Endothelial cell of umbilical vein (primary cell): ENCODE measurements at regions of chr1 and their contacts with region 1.

Region 1: DNA sequence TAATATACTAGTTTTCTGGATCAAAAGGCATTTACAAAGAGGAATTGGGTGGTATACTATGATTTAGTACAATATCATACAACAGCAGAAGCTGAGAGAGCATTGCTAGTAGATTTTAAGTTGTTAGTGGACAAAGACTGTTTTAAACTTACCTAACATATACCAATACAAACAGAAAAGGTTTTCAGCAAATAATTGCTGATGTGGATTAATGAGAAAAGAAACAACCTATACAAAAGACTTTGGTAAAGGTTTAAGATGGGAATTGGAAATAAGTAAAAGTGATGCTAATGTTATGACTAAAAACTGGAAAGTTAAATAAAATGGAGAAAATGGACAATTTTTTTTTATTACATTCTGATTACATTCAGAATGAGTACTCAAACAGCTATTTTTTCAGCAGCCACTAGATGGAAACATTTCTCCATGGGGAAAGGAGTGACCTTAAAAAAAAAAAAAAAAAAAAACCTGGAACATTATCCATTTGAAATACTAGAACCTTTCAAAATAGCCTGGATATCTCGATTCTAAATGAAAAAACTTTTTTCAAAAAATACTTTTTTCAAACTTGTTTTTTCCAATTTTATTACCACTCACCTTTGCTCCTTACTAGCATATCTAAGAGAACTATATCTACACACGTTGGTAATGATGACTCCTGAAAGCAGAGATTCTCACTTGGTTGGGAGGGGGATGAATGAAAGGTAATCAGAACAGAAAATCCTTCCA is 55.4 kb downstream of the EPRS1 start:
- DNase-seq: peak; percentile 58
- H3K4me3 ChIP-seq: no peak overlapping the region
- H3K27ac ChIP-seq: no peak overlapping the region
- H3K4me1 ChIP-seq: no peaks in the 10 kb centered on the region
- H3K27me3 ChIP-seq: no peaks in the 10 kb centered on the region
- CTCF ChIP-seq: peak; percentile 31 to 47
- POLR2A ChIP-seq: no peak

Region 2: GRCh38 chr1:219639876-219640577 is 350.9 kb before region 1 on chr1:
- CTCF ChIA-PET with region 1: no interaction called
- POLR2A ChIA-PET with region 1: no interaction called
- dilution Hi-C with region 1: no loop called
- intact Hi-C with region 1: no loop called
- DNase-seq: no peak
- H3K4me3 ChIP-seq: no peak overlapping the region
- H3K27ac ChIP-seq: no peak overlapping the region
- H3K4me1 ChIP-seq: no peaks in the 10 kb centered on the region
- H3K27me3 ChIP-seq: no peaks in the 10 kb centered on the region
- CTCF ChIP-seq: no peak
- POLR2A ChIP-seq: no peak

Region 3: DNA sequence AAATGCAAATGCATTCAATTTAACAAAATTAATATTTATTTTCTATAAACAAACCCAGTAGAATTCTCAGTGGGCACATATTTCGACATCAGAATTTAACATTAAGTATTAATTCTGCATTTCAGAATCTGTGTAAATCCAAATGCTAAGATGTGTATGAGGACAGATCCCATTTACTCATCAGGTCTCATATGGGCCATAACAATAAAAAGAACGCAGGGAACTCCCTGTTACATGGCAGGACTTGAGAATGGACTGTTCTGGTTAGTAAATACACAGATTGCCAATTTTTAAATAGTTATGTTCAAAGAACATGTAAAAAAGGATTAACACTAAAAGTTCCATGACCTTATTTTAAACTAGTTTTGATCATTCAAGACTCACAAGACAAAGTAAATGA is 166.6 kb before region 1 on chr1:
- CTCF ChIA-PET with region 1: no interaction called
- POLR2A ChIA-PET with region 1: no interaction called
- dilution Hi-C with region 1: no loop called
- intact Hi-C with region 1: no loop called
- DNase-seq: no peak
- H3K4me3 ChIP-seq: no peak overlapping the region
- H3K27ac ChIP-seq: no peak overlapping the region
- H3K4me1 ChIP-seq: no peaks in the 10 kb centered on the region
- H3K27me3 ChIP-seq: no peaks in the 10 kb centered on the region
- CTCF ChIP-seq: no peak
- POLR2A ChIP-seq: no peak

Region 4: DNA sequence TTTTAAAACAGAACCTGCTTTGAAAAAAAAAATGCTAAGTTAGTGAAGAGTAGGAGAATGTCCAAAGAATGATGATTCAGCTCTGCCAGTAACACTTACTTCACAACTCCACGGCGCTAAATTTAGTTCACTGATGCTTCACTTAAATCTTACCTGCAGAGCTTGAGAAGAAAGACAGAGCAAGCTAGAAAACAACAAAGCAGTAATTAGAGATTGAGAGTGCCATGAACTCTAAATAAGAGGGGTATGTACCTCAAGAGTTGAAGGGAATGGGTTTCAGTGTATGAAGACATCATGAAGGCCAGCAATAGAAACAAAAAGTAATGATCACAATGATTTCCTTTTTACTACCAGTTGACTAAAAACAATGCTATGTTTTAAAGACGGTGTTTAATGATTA is 22.6 kb after region 1 on chr1:
- CTCF ChIA-PET with region 1: interaction called, 36 read pairs
- POLR2A ChIA-PET with region 1: interaction called, 4 read pairs
- dilution Hi-C with region 1: no loop called
- intact Hi-C with region 1: no loop called
- DNase-seq: no peak
- H3K4me3 ChIP-seq: no peak overlapping the region
- H3K27ac ChIP-seq: no peak overlapping the region
- H3K4me1 ChIP-seq: no peaks in the 10 kb centered on the region
- H3K27me3 ChIP-seq: no peaks in the 10 kb centered on the region
- CTCF ChIP-seq: no peak
- POLR2A ChIP-seq: no peak

Region 5: GRCh38 chr1:220089650-220090556 is 99.0 kb after region 1 on chr1 and contains the start of gene BPNT1:
- CTCF ChIA-PET with region 1: interaction called, 14 read pairs
- POLR2A ChIA-PET with region 1: no interaction called
- dilution Hi-C with region 1: no loop called
- intact Hi-C with region 1: no loop called
- DNase-seq: peak; percentile 97
- H3K4me3 ChIP-seq: peak within 1 kb of the TSS; percentile 44 to 82 (median 46)
- H3K27ac ChIP-seq: peak within 1 kb of the TSS; percentile 0
- H3K4me1 ChIP-seq: peaks cover 3% of the 10 kb centered on the region
- H3K27me3 ChIP-seq: no peaks in the 10 kb centered on the region
- CTCF ChIP-seq: no peak
- POLR2A ChIP-seq: peak; percentile 96
- total RNA-seq, gene BPNT1: 17.4 and 20.3 TPM in 2 replicates

Region 6: GRCh38 chr1:220113136-220113695 is 122.3 kb after region 1 on chr1:
- CTCF ChIA-PET with region 1: interaction called, 12 read pairs
- POLR2A ChIA-PET with region 1: no interaction called
- dilution Hi-C with region 1: no loop called
- intact Hi-C with region 1: no loop called
- DNase-seq: peak; percentile 40
- H3K4me3 ChIP-seq: no peak overlapping the region
- H3K27ac ChIP-seq: no peak overlapping the region
- H3K4me1 ChIP-seq: no peaks in the 10 kb centered on the region
- H3K27me3 ChIP-seq: no peaks in the 10 kb centered on the region
- CTCF ChIP-seq: peak; percentile 50 to 56
- POLR2A ChIP-seq: no peak

Region 7: DNA sequence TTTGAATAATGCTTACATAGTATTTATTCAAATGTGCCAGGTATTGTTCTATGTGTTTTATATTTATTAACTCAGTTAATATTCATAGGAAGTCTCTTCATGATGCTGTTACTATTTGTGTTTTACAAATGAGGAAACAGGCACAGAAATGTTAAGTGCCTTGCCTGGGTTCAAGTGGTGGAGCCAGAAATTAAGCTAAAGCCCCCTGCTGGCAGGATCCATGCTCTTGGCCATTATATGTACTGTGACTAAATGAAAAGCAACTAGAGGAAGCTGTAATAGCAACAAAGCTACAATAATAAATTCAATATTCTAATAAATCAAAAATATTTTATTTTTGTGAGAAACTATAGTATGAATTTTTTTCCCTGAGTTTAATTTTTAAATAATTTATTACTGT is 132.9 kb after region 1 on chr1:
- CTCF ChIA-PET with region 1: interaction called, 22 read pairs
- POLR2A ChIA-PET with region 1: no interaction called
- dilution Hi-C with region 1: no loop called
- intact Hi-C with region 1: loop called (anchors 2 kb)
- DNase-seq: no peak
- H3K4me3 ChIP-seq: no peak overlapping the region
- H3K27ac ChIP-seq: no peak overlapping the region
- H3K4me1 ChIP-seq: no peaks in the 10 kb centered on the region
- H3K27me3 ChIP-seq: no peaks in the 10 kb centered on the region
- CTCF ChIP-seq: peak; percentile 28 to 31
- POLR2A ChIP-seq: no peak

Region 8: DNA sequence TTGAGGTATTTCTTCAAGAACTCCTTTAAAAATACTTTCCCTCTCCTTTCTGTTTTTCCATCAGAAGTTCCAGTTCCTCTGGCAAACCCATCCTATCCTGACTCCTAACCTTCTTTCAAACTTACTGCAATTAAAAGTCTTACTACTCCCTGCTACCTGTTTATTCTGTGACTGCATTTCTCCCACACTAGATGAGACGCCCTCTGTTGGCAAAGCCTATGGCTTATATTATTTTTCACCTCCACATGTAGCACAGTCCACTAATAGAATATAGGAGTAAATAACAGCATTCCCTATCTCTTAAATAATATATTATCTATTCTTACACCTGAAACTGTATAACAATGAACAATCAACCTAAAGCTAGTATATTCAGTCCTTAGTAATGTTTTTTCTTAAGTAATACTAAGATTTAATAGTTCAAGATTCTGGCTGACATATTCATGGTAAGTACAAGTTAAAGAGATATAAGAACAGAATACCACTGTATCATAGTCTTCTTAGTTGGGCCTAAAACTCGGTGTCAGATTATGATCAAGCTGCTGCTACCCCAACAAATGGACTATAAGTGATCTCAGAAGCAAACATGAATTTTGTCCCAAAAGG is 226.5 kb after region 1 on chr1:
- CTCF ChIA-PET with region 1: interaction called, 20 read pairs
- POLR2A ChIA-PET with region 1: no interaction called
- dilution Hi-C with region 1: no loop called
- intact Hi-C with region 1: loop called (anchors 1 kb)
- DNase-seq: peak; percentile 29
- H3K4me3 ChIP-seq: no peak overlapping the region
- H3K27ac ChIP-seq: no peak overlapping the region
- H3K4me1 ChIP-seq: no peaks in the 10 kb centered on the region
- H3K27me3 ChIP-seq: no peaks in the 10 kb centered on the region
- CTCF ChIP-seq: peak; percentile 13 to 26
- POLR2A ChIP-seq: no peak